Panc1 (cell line): ENCODE measurements at regions of chr1 and their contacts with region 1.

Region 1: GRCh38 chr1:22845398-22845935 is 127.2 kb downstream of the LACTBL1 start:
- DNase-seq: no peak
- ATAC-seq: no peak
- H3K4me3 ChIP-seq: no peak overlapping the region
- H3K27ac ChIP-seq: no peak overlapping the region
- H3K4me1 ChIP-seq: no peaks in the 10 kb centered on the region
- H3K27me3 ChIP-seq: no peaks in the 10 kb centered on the region
- CTCF ChIP-seq: no peak

Region 2: DNA sequence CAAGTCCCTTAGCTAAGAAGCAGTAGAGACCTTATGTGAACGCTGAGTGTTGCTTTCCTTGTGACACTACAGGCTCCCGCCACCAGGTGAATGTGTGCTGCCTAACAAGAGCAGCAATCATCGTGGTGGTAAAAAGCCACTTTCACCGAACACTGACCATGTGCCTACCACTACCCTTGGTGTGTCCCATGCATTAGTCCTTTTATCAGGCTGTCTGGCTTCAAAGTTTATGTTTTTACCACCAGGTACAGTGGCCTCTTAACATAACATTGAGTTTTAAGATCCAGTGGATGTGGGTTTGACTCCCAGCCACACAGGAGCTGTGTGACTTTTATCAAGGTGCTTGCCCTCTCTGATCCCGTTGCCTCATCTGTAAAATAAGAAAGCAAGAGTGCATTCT is 190.8 kb before region 1 on chr1:
- CTCF ChIA-PET with region 1: no interaction called
- POLR2A ChIA-PET with region 1: interaction called, 24 read pairs
- in situ Hi-C with region 1: no loop called
- intact Hi-C with region 1: no loop called
- DNase-seq: no peak
- ATAC-seq: peak; percentile 78; the same call in 1 of the 2 replicates
- H3K4me3 ChIP-seq: no peak overlapping the region
- H3K27ac ChIP-seq: no peak overlapping the region
- H3K4me1 ChIP-seq: no peaks in the 10 kb centered on the region
- H3K27me3 ChIP-seq: no peaks in the 10 kb centered on the region; the same call in 1 of the 2 replicates
- CTCF ChIP-seq: no peak

Region 3: DNA sequence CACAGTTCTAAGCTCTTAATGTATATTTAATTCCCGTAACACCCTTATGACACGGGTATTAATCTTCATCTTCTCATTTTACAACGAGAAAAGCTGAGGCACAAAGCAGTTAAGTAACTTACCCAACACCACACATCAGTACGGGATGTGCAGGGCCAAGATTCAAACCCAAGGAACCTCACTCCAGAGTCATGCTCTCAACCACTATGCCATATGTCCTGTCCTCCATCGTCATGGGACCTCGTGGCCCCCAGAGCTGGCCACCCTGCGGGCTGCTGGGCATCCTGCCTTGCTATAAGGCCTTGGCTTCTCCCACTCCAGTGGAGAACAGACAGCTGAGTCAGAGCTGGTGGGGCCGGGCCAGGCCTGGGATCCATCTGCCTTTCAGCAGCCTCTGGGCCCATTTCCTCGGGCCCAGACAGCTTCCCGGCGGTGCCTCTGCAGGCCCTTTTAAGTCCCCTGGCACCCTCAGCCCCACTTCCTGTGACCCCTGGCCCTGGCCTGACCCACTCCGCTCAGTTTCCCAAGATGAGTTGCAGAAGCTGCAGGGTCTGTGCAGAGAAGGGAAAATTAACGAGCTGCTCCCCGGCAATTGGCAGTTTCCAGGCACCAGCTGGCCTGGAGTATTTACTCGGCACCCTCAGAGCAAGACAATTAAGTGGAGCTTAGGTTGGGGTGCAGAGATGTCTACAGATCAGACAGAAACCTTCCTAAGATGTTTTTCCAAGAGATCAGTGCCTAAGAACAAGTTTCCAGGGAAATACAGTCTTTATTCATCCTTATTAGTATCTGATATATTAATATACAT is 36.6 kb before region 1 on chr1:
- CTCF ChIA-PET with region 1: no interaction called
- POLR2A ChIA-PET with region 1: no interaction called
- in situ Hi-C with region 1: no loop called
- intact Hi-C with region 1: no loop called
- DNase-seq: no peak
- ATAC-seq: no peak
- H3K4me3 ChIP-seq: no peak overlapping the region
- H3K27ac ChIP-seq: no peak overlapping the region
- H3K4me1 ChIP-seq: no peaks in the 10 kb centered on the region
- H3K27me3 ChIP-seq: no peaks in the 10 kb centered on the region
- CTCF ChIP-seq: no peak